GM12878 (cell line): ENCODE measurements at regions of chr9 and their contacts with region 1.

Region 1: DNA sequence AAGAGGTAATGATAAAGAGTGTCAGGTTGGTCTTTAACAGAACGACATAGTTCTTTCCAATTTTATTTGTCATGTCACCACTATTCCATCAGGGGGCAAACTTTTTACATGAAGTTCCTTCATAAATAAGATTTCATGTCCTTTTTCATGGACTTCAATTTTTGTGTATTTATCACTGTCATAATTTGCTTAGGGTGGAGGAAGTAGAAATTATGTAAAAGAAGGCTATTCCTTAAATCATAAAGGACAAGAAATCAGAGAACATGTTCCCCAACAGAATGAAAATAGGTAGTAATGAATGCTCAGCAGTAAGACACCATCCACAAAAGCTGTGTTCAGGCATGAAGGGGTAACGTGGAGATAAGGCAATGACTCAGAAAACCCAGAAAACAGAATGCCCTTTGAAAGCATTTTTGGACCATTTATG is 72.7 kb downstream of the ZFAND5 start:
- DNase-seq: no peak
- ATAC-seq: peak; percentile 61
- H3K4me3 ChIP-seq: no peak overlapping the region
- H3K27ac ChIP-seq: no peak overlapping the region
- H3K4me1 ChIP-seq: no peaks in the 10 kb centered on the region
- H3K27me3 ChIP-seq: no peaks in the 10 kb centered on the region
- CTCF ChIP-seq: peak; percentile 27 to 63 (median 33); a peak in 4 of 6 replicates
- EP300 ChIP-seq: no peak
- POLR2A ChIP-seq: no peak
- RAD21 ChIP-seq: peak; percentile 65

Region 2: GRCh38 chr9:72305102-72305546 is 12.9 kb after region 1 on chr9:
- CTCF ChIA-PET with region 1: interaction called, 4 read pairs
- POLR2A ChIA-PET with region 1: no interaction called
- RAD21 ChIA-PET with region 1: interaction called, 3 read pairs
- SMC1A ChIA-PET with region 1: interaction called, 17 read pairs
- in situ Hi-C with region 1: no loop called
- intact Hi-C with region 1: no loop called
- DNase-seq: no peak
- ATAC-seq: peak; percentile 52
- H3K4me3 ChIP-seq: no peak overlapping the region; the same call in 1 of the 2 replicates
- H3K27ac ChIP-seq: no peak overlapping the region; the same call in 1 of the 2 replicates
- H3K4me1 ChIP-seq: peaks cover 11% of the 10 kb centered on the region
- H3K27me3 ChIP-seq: no peaks in the 10 kb centered on the region
- CTCF ChIP-seq: no peak
- EP300 ChIP-seq: no peak
- POLR2A ChIP-seq: no peak
- RAD21 ChIP-seq: no peak

Region 3: GRCh38 chr9:72592502-72593403 is 300.5 kb after region 1 on chr9:
- CTCF ChIA-PET with region 1: interaction called, 69 read pairs
- POLR2A ChIA-PET with region 1: no interaction called
- RAD21 ChIA-PET with region 1: interaction called, 54 read pairs
- SMC1A ChIA-PET with region 1: interaction called, 12 read pairs
- in situ Hi-C with region 1: no loop called
- intact Hi-C with region 1: loop called (anchors 1 kb)
- DNase-seq: peak; percentile 23
- ATAC-seq: peak; percentile 94
- H3K4me3 ChIP-seq: no peak overlapping the region
- H3K27ac ChIP-seq: no peak overlapping the region
- H3K4me1 ChIP-seq: no peaks in the 10 kb centered on the region
- H3K27me3 ChIP-seq: no peaks in the 10 kb centered on the region
- CTCF ChIP-seq: peak; percentile 64 to 76 (median 69)
- EP300 ChIP-seq: no peak
- POLR2A ChIP-seq: no peak
- RAD21 ChIP-seq: peak; percentile 86

Region 4: GRCh38 chr9:72827950-72828731 is 535.9 kb after region 1 on chr9:
- CTCF ChIA-PET with region 1: interaction called, 16 read pairs
- POLR2A ChIA-PET with region 1: no interaction called
- RAD21 ChIA-PET with region 1: no interaction called
- SMC1A ChIA-PET with region 1: interaction called, 3 read pairs
- in situ Hi-C with region 1: no loop called
- intact Hi-C with region 1: no loop called
- DNase-seq: no peak
- ATAC-seq: no peak
- H3K4me3 ChIP-seq: no peak overlapping the region
- H3K27ac ChIP-seq: no peak overlapping the region
- H3K4me1 ChIP-seq: no peaks in the 10 kb centered on the region
- H3K27me3 ChIP-seq: no peaks in the 10 kb centered on the region
- CTCF ChIP-seq: no peak
- EP300 ChIP-seq: no peak
- POLR2A ChIP-seq: no peak
- RAD21 ChIP-seq: no peak